GM10248 (cell line): ENCODE measurements at regions of chr6 and their contacts with region 1.

Region 1: GRCh38 chr6:108598305-108598863 is 37.7 kb downstream of the FOXO3 start:
- DNase-seq: peak; percentile 14
- CTCF ChIP-seq: no peak

Region 2: GRCh38 chr6:108609276-108609769 is 10.9 kb after region 1 on chr6:
- CTCF ChIA-PET with region 1: interaction called, 10 read pairs
- POLR2A ChIA-PET with region 1: interaction called, 3 read pairs
- DNase-seq: no peak
- CTCF ChIP-seq: no peak

Region 3: DNA sequence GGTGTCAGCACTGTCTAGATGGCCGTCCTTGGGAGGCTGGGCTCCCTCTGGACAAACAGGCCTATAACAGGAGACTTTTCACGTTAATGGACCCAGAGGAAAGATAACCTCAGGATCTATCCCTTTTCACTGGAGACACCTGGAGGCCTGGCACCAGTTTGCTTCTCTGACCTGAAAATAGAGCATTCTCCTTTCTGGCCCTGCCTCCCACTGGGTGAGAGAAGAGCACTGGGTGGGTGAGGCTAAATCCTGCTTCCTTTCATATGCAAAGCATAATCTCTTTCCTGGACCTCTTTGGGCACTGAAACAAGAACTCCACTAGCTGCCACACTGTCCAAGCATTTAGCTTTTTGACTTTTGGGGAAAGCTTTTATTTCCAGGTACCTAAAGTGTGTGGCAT is 40.6 kb after region 1 on chr6:
- CTCF ChIA-PET with region 1: no interaction called
- POLR2A ChIA-PET with region 1: no interaction called
- DNase-seq: no peak
- CTCF ChIP-seq: no peak